ENCODE measurements at regions of chr17 and their contacts with region 1.

Region 1: DNA sequence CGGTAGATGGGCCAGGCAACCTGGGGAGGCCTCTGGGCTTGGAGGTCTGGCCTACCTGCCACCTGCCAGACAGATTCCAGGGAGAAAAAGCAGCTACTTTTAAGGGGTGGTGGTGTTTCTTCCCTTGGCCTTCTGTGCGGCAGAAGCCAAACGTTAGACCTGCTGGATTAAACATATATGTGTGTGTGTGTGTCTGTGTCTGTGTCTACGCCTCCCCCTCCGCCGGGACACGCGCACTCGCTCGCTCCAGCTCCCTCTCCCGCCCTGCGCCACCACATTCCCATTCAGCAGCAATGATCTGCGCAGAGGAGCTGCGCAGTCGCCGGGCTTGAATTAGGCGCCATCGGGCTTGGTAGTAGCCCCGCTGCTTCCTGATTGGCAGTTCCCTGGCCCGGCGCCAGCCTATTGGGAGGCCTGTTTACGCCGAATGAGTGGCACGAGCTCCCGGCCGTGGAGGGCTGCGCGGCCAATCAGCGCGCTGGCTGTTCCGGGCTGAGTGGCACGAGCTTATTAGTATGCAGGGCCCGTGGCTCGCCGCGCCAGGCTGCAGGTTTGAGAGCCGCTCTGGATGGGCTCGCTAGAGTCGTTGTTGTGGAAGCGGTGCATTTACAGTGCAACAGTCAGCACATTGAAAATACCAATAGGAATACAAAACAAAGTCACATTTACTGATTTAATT is at the start of gene BAHCC1:
- DNase-seq: peak; percentile 85
- ATAC-seq: peak; percentile 80 to 89 (median 82)
- H3K4me3 ChIP-seq: peak within 1 kb of the TSS; percentile 16
- H3K4me3 Mint-ChIP-seq: peak within 1 kb of the TSS; percentile 94
- H3K27ac ChIP-seq: no peak within 1 kb of the TSS
- H3K27ac Mint-ChIP-seq: peak within 1 kb of the TSS; percentile 86 to 92
- H3K4me1 ChIP-seq: peaks cover 63% of the 10 kb centered on the region
- H3K4me1 Mint-ChIP-seq: peaks cover 29 to 35% of the 10 kb centered on the region in 2 donors
- H3K27me3 ChIP-seq: peaks cover 48% of the 10 kb centered on the region
- H3K27me3 Mint-ChIP-seq: peaks cover 0 to 37% of the 10 kb centered on the region in 2 donors
- CTCF ChIP-seq: no peak
- total RNA-seq, gene BAHCC1: 2.9 to 17.3 (median 5.7) TPM

Region 2: DNA sequence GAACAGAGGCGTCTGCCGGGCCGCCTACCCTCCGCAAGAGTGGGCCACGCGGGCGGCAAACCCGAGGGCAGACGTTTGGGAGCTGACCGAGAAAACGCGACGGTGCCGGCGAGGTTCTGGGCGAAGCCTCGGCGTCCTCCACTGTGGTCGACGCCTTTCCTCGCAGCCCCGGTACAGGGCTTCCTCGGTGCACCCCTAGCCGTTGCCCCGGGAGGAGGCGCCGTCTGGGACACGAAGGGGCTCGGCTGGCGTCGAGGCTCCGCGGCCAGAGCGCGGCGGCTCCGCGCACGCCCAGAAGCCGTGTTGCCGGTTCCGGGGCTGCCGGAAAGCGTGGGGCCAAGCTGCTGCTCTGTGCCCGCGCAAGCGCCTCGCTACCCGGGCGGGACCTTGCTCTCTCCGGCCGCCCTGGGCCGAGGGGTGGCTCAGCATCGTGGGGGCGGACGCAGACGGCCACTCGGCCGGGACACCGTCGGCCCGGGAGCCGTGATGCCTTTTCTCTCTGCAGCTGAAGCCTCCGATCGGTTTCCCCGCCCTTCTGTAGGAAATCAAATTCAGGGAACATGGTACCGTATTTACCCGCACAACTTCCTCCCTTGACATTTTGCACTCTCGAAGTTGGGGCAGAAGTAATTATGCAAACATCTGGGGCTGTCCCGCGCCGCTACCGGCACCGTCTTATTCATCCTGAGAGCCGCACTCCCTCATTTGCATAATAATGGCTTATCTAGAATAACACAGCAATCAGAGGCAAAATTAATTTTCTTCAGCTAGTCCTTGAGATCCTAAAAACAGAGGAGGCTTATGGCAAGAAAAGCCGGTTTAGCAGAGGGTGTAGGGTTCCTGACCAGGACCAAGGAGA is 1590.8 kb before region 1 on chr17:
- intact Hi-C with region 1: loop called (anchors 5 kb)
- DNase-seq: peak in 1 of 2 donors; percentile 70
- ATAC-seq: peak in 2 of 3 donors; percentile 48 to 55
- H3K4me3 ChIP-seq: no peak overlapping the region
- H3K4me3 Mint-ChIP-seq: peak overlapping the region; percentile 81
- H3K27ac ChIP-seq: no peak overlapping the region
- H3K27ac Mint-ChIP-seq: peak overlapping the region; percentile 75 to 76
- H3K4me1 ChIP-seq: peaks cover 60% of the 10 kb centered on the region
- H3K4me1 Mint-ChIP-seq: peaks cover 26 to 44% of the 10 kb centered on the region in 2 donors
- H3K27me3 ChIP-seq: peaks cover 98% of the 10 kb centered on the region
- H3K27me3 Mint-ChIP-seq: peaks cover 65 to 72% of the 10 kb centered on the region in 2 donors
- CTCF ChIP-seq: no peak

Region 3: GRCh38 chr17:81346090-81346907 is 48.8 kb before region 1 on chr17:
- intact Hi-C with region 1: loop called (anchors 2 kb)
- DNase-seq: peak; percentile 85 to 94
- ATAC-seq: peak; percentile 89 to 95 (median 93)
- H3K4me3 ChIP-seq: peak overlapping the region; percentile 36
- H3K4me3 Mint-ChIP-seq: peak overlapping the region; percentile 57
- H3K27ac ChIP-seq: no peak overlapping the region
- H3K27ac Mint-ChIP-seq: no peak overlapping the region
- H3K4me1 ChIP-seq: peaks cover 54% of the 10 kb centered on the region
- H3K4me1 Mint-ChIP-seq: peaks cover 6 to 22% of the 10 kb centered on the region in 2 donors
- H3K27me3 ChIP-seq: peaks cover 35% of the 10 kb centered on the region
- H3K27me3 Mint-ChIP-seq: peaks cover 23 to 32% of the 10 kb centered on the region in 2 donors
- CTCF ChIP-seq: no peak

Measured in natural killer cell (primary cell).